MCF 10A (cell line): ENCODE measurements at regions of chr1 and their contacts with region 1.

Region 1: DNA sequence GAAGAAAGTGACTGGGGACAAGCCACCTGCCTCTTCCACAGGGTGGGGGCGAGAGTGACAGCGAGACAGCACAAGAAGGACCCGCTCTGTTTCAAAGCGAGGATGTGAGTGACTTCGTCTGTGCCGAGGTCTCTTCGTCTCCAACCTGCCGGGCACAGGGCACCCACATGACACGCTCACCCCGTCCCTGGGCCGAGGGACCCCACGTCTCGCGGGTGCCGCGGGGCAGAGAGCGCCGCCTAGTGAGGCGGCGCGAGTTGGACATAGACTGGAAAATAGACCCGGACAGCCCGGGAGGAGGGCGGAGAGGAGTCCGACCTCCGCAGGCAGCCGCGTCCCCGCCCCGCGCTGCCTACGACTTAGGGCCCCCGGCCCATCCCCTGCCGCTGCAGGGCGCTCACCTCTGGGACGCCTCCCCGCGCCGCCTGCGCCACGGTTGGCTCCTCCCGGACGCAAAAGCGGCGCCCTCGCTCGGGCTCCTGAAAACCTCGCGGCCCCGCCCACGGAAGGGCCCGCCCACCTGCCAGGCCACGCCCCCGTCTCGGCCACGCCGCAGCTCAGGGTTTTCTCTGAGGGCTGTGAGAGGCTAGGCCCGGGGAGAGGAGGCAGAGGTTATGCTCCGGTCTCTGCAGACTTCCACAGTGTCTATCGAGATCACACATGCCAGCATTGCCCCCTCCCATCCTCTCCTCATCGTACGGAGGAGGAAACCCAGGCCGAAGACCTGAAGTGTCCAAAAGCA is at the start of gene TLR5:
- DNase-seq: peak; percentile 92
- H3K4me3 Mint-ChIP-seq: peak within 1 kb of the TSS; percentile 63
- H3K27ac Mint-ChIP-seq: no peak within 1 kb of the TSS
- H3K4me1 Mint-ChIP-seq: peaks cover 6% of the 10 kb centered on the region
- H3K27me3 Mint-ChIP-seq: no peaks in the 10 kb centered on the region
- CTCF ChIP-seq: peak; percentile 96
- total RNA-seq, gene TLR5: 0.81 and 1.5 TPM in 2 replicates

Region 2: GRCh38 chr1:222953585-222953984 is 189.4 kb before region 1 on chr1:
- CTCF ChIA-PET with region 1: no interaction called
- POLR2A ChIA-PET with region 1: no interaction called
- intact Hi-C with region 1: no loop called
- DNase-seq: no peak
- H3K4me3 Mint-ChIP-seq: no peak overlapping the region
- H3K27ac Mint-ChIP-seq: no peak overlapping the region
- H3K4me1 Mint-ChIP-seq: peaks cover 17% of the 10 kb centered on the region
- H3K27me3 Mint-ChIP-seq: no peaks in the 10 kb centered on the region
- CTCF ChIP-seq: no peak

Region 3: GRCh38 chr1:223153177-223154119 is 10.5 kb after region 1 on chr1:
- CTCF ChIA-PET with region 1: interaction called, 13 read pairs
- POLR2A ChIA-PET with region 1: interaction called, 3 read pairs
- intact Hi-C with region 1: no loop called
- DNase-seq: peak; percentile 30
- H3K4me3 Mint-ChIP-seq: no peak overlapping the region
- H3K27ac Mint-ChIP-seq: no peak overlapping the region
- H3K4me1 Mint-ChIP-seq: peaks cover 8% of the 10 kb centered on the region
- H3K27me3 Mint-ChIP-seq: no peaks in the 10 kb centered on the region
- CTCF ChIP-seq: no peak

Region 4: DNA sequence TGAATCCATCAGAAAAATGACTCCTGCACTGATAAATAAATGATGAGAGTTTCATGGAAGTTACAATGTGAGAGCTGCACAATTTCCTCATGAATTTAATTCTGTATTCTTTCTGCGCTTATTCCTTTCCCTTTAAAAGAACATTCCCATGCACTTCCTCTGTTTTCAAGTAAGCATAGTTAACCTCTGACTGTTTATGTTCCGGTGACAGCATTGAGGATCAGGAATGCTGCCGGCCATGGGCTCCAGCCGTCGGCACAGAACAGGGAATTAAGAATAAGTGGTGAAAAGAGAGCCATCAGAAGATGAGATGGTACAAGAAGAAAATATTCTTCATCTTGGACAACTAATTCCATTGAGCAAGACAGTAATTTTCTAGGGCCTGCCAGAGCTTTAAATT is 155.7 kb after region 1 on chr1:
- CTCF ChIA-PET with region 1: no interaction called
- POLR2A ChIA-PET with region 1: no interaction called
- intact Hi-C with region 1: no loop called
- DNase-seq: no peak
- H3K4me3 Mint-ChIP-seq: no peak overlapping the region
- H3K27ac Mint-ChIP-seq: no peak overlapping the region
- H3K4me1 Mint-ChIP-seq: no peaks in the 10 kb centered on the region
- H3K27me3 Mint-ChIP-seq: no peaks in the 10 kb centered on the region
- CTCF ChIP-seq: no peak